Activated CD4-positive, alpha-beta T cell treated with anti-CD3 and anti-CD28 coated beads, Interleukin-2, amount 10 ng/mL, durations not matched to agents 7 days and 5 days (primary cell): ENCODE measurements at regions of chr1 and their contacts with region 1.

Region 1: GRCh38 chr1:119859647-119860046 is 36.7 kb downstream of the ADAM30 start:
- DNase-seq: peak; percentile 28
- H3K4me3 Mint-ChIP-seq: no peak overlapping the region
- H3K27ac Mint-ChIP-seq: peak overlapping the region; percentile 73
- H3K4me1 Mint-ChIP-seq: peaks cover 22% of the 10 kb centered on the region
- H3K27me3 Mint-ChIP-seq: peaks cover 29% of the 10 kb centered on the region

Region 2: DNA sequence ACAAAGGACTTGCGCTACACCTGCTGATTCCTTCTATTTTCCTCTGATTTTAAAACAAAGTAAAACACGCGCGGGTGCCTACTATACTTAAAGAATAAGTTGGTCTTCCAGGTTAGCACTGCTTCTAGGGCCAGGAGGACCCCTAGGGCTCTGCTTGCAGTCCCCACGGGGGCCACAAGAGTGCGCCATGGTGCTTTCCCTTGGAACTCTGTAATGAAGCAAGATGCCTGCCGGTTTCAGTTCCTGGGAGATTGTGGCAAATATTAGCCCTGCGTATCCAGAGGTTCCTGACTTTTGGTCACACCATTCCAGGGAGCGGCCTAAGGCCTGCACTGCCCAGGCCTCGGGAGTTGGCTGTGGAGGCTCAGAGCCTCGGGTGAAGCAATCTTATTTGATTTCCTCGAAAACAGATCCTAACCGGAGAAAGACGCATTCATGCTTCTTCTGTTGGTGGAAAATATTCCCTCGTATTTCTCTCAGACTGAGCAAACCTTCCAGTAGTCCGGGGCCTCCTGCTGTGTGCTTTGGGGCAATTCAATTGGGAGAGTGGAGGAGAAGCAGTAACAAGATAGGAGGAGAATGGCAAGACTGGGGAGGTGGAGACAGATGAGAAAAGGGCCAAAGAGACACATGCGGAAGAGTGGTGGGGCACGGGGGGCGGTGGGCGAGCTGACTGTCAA is 11.4 kb after region 1 on chr1:
- CTCF ChIA-PET with region 1: interaction called, 16 read pairs
- POLR2A ChIA-PET with region 1: no interaction called
- DNase-seq: peak; percentile 73
- H3K4me3 Mint-ChIP-seq: no peak overlapping the region
- H3K27ac Mint-ChIP-seq: no peak overlapping the region
- H3K4me1 Mint-ChIP-seq: peaks cover 2% of the 10 kb centered on the region
- H3K27me3 Mint-ChIP-seq: peaks cover 46% of the 10 kb centered on the region

Region 3: DNA sequence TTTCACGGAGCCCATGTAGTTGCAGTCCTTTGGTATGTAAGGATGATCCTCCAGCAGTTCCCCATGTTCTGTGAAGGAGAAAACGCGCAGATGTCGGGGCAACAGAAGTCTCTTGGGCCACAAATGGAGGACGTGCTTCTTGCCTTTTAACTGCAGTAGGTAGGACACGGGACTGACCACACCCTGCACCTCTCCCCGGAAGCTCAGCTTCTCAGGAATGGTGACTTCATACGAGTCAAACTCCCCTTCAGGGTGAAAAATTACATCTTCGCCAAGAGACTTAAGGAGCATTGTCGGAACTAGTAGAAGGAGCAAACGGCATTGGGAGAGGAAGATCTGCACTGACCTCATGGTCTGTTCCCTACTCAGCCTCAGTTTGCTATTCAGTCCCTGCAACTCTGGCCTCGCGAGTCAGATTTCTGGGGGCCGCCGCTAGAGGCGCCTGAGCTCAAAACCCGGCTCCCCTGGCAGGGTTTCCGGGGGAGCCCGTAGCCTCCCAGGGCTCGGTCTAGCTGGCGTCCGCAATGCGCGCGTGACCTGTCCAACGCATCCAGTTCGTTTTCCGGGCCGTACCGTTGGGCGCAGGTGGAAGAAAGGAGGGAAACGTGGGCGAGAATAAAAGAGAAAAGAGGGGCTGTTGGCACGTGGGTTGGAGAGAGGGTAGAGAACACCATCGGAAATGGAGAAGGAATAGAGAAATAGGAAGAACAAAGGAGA is 36.5 kb after region 1 on chr1 and contains the start of gene ADAM30:
- CTCF ChIA-PET with region 1: no interaction called
- POLR2A ChIA-PET with region 1: no interaction called
- DNase-seq: no peak
- H3K4me3 Mint-ChIP-seq: no peak within 1 kb of the TSS
- H3K27ac Mint-ChIP-seq: no peak within 1 kb of the TSS
- H3K4me1 Mint-ChIP-seq: peaks cover 35% of the 10 kb centered on the region
- H3K27me3 Mint-ChIP-seq: peaks cover 25% of the 10 kb centered on the region
- total RNA-seq, gene ADAM30: not detected